ENCODE measurements at regions of chr12 and their contacts with region 1.

Region 1: GRCh38 chr12:57846577-57847319 is at the start of gene CTDSP2:
- DNase-seq: peak; percentile 91 to 97
- H3K4me3 ChIP-seq: peak within 1 kb of the TSS; percentile 100
- H3K27ac ChIP-seq: peak within 1 kb of the TSS; percentile 79
- H3K4me1 ChIP-seq: peaks cover 15% of the 10 kb centered on the region
- H3K27me3 ChIP-seq: no peaks in the 10 kb centered on the region
- CTCF ChIP-seq: no peak
- total RNA-seq, gene CTDSP2: 102 and 107 TPM in 2 replicates

Region 2: GRCh38 chr12:57488402-57489155 is 358.2 kb before region 1 on chr12:
- CTCF ChIA-PET with region 1: interaction called, 11 read pairs
- POLR2A ChIA-PET with region 1: no interaction called
- intact Hi-C with region 1: no loop called
- DNase-seq: no peak
- H3K4me3 ChIP-seq: peak overlapping the region; percentile 97
- H3K27ac ChIP-seq: peak overlapping the region; percentile 73
- H3K4me1 ChIP-seq: no peaks in the 10 kb centered on the region; the same call in 1 of the 2 replicates
- H3K27me3 ChIP-seq: no peaks in the 10 kb centered on the region
- CTCF ChIP-seq: no peak

Region 3: GRCh38 chr12:57726151-57726883 is 120.4 kb before region 1 on chr12:
- CTCF ChIA-PET with region 1: no interaction called
- POLR2A ChIA-PET with region 1: interaction called, 13 read pairs
- intact Hi-C with region 1: no loop called
- DNase-seq: peak; percentile 58 to 85
- H3K4me3 ChIP-seq: peak overlapping the region; percentile 80
- H3K27ac ChIP-seq: no peak overlapping the region
- H3K4me1 ChIP-seq: no peaks in the 10 kb centered on the region
- H3K27me3 ChIP-seq: peaks cover 7% of the 10 kb centered on the region; the same call in 1 of the 2 replicates
- CTCF ChIP-seq: peak; percentile 89

Region 4: DNA sequence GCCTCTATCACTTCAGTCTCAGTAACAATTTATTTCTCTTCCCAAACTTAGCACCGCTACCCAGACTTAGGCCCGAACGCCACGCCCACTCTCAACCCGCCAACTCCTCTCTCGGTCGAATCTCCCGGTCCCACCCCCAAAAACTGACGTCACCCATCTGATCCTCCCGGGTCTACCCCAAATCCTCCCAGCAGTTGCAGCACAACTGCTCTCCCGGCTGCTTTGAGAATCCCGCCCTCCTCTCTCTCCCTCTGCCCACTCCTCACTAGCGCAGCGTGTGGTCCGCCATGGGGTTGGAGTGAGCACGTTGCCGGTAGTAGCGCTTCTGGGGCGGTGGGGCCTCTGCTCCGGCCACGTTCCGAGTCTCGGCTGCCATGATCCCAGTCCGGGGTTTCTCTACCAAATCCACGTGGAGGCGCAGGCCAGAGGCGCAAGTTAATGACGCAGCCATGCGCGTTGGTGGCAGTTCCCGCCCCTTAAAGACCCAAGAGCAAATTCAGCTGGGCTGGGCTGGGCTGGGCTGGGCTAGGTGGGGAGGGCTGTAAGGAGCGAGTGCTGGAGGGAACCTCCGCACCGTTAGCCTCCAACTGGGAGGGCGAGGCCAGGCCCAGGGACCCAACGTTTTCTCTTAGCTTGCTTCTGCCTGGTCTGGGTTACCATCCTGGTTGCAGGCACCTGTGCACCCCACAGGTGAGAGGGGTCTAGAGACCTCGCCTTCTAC is 74.9 kb before region 1 on chr12 and contains the start of gene METTL1:
- CTCF ChIA-PET with region 1: no interaction called
- POLR2A ChIA-PET with region 1: interaction called, 13 read pairs
- intact Hi-C with region 1: no loop called
- DNase-seq: peak; percentile 89 to 91
- H3K4me3 ChIP-seq: peak within 1 kb of the TSS; percentile 68
- H3K27ac ChIP-seq: peak within 1 kb of the TSS; percentile 75
- H3K4me1 ChIP-seq: peaks cover 8% of the 10 kb centered on the region; the same call in 1 of the 2 replicates
- H3K27me3 ChIP-seq: no peaks in the 10 kb centered on the region
- CTCF ChIP-seq: no peak
- total RNA-seq, gene METTL1: 15.8 and 17.9 TPM in 2 replicates

Region 5: GRCh38 chr12:57865090-57865751 is 18.5 kb after region 1 on chr12:
- CTCF ChIA-PET with region 1: interaction called, 4 read pairs
- POLR2A ChIA-PET with region 1: no interaction called
- intact Hi-C with region 1: loop called (anchors 2 kb)
- DNase-seq: peak; percentile 54 to 72
- H3K4me3 ChIP-seq: peak overlapping the region; percentile 66
- H3K27ac ChIP-seq: peak overlapping the region; percentile 58
- H3K4me1 ChIP-seq: peaks cover 38% of the 10 kb centered on the region
- H3K27me3 ChIP-seq: no peaks in the 10 kb centered on the region
- CTCF ChIP-seq: no peak

Region 6: GRCh38 chr12:57899010-57899662 is 52.4 kb after region 1 on chr12:
- CTCF ChIA-PET with region 1: interaction called, 6 read pairs
- POLR2A ChIA-PET with region 1: no interaction called
- intact Hi-C with region 1: loop called (anchors 2 kb)
- DNase-seq: peak in 1 of 2 experiments; percentile 38
- H3K4me3 ChIP-seq: no peak overlapping the region
- H3K27ac ChIP-seq: no peak overlapping the region
- H3K4me1 ChIP-seq: peaks cover 34% of the 10 kb centered on the region
- H3K27me3 ChIP-seq: no peaks in the 10 kb centered on the region
- CTCF ChIP-seq: no peak

Measured in PC-9 (cell line).